ENCODE measurements at regions of chr19 and their contacts with region 1.

Region 1: GRCh38 chr19:6516659-6517291 is 14.1 kb upstream of the TNFSF9 start:
- DNase-seq: peak; percentile 67 to 96 (median 87)
- ATAC-seq: peak; percentile 86 to 90 (median 88)
- H3K4me3 ChIP-seq: peak overlapping the region; percentile 50 to 89
- H3K4me3 Mint-ChIP-seq: peak overlapping the region; percentile 90 to 96 (median 94)
- H3K27ac ChIP-seq: no peak overlapping the region
- H3K27ac Mint-ChIP-seq: peak overlapping the region; percentile 18 to 67
- H3K4me1 ChIP-seq: peaks cover 13 to 33% of the 10 kb centered on the region in 2 experiments
- H3K4me1 Mint-ChIP-seq: peaks cover 26 to 37% (median 36%) of the 10 kb centered on the region in 3 donors
- H3K27me3 ChIP-seq: no peaks in the 10 kb centered on the region
- H3K27me3 Mint-ChIP-seq: no peaks in the 10 kb centered on the region

Region 2: DNA sequence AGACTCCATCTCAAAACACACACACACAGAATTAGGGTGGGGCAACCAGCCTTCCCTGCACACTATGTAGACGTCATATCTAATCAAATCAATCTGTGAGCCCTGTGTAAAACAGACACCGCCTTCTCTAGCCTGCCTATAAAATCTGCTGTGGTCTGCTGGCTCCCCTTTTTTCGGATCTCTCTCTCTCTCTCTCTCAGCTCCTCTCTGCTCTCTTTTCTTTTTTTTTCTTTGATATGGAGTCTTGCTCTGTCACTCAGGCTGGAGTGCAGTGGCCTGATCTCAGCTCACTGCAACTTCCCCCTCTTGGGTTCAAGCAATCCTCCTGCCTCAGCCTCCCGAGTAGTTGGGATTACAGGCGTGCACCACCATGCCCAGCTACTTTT is 85.9 kb after region 1 on chr19:
- CTCF ChIA-PET with region 1: no interaction called
- POLR2A ChIA-PET with region 1: no interaction called
- DNase-seq: peak in 1 of 35 experiments; percentile 26
- ATAC-seq: peak in 1 of 4 experiments; percentile 52
- H3K4me3 ChIP-seq: no peak overlapping the region
- H3K4me3 Mint-ChIP-seq: peak overlapping the region in 2 of 3 donors; percentile 10 to 21
- H3K27ac ChIP-seq: no peak overlapping the region
- H3K27ac Mint-ChIP-seq: peak overlapping the region in 1 of 2 donors; percentile 61
- H3K4me1 ChIP-seq: peaks cover 0 to 26% of the 10 kb centered on the region in 2 experiments
- H3K4me1 Mint-ChIP-seq: peaks cover 18 to 37% (median 20%) of the 10 kb centered on the region in 3 donors
- H3K27me3 ChIP-seq: peaks cover 0 to 6% of the 10 kb centered on the region in 2 experiments
- H3K27me3 Mint-ChIP-seq: peaks cover 3% of the 10 kb centered on the region in 2 donors

Region 3: GRCh38 chr19:6862673-6863078 is 345.9 kb after region 1 on chr19:
- CTCF ChIA-PET with region 1: interaction called, 4 to 20 read pairs
- POLR2A ChIA-PET with region 1: no interaction called
- DNase-seq: peak; percentile 80 to 95 (median 87)
- ATAC-seq: peak; percentile 87 to 92 (median 90)
- H3K4me3 ChIP-seq: peak overlapping the region; percentile 41 to 62
- H3K4me3 Mint-ChIP-seq: peak overlapping the region; percentile 69 to 86 (median 85)
- H3K27ac ChIP-seq: peak overlapping the region; percentile 54
- H3K27ac Mint-ChIP-seq: peak overlapping the region; percentile 66 to 83
- H3K4me1 ChIP-seq: peaks cover 5 to 20% of the 10 kb centered on the region in 2 experiments
- H3K4me1 Mint-ChIP-seq: peaks cover 18 to 32% (median 28%) of the 10 kb centered on the region in 3 donors
- H3K27me3 ChIP-seq: no peaks in the 10 kb centered on the region
- H3K27me3 Mint-ChIP-seq: no peaks in the 10 kb centered on the region

Measured in T-cell (primary cell).